MCF 10A (cell line): ENCODE measurements at regions of chr19 and their contacts with region 1.

Region 1: DNA sequence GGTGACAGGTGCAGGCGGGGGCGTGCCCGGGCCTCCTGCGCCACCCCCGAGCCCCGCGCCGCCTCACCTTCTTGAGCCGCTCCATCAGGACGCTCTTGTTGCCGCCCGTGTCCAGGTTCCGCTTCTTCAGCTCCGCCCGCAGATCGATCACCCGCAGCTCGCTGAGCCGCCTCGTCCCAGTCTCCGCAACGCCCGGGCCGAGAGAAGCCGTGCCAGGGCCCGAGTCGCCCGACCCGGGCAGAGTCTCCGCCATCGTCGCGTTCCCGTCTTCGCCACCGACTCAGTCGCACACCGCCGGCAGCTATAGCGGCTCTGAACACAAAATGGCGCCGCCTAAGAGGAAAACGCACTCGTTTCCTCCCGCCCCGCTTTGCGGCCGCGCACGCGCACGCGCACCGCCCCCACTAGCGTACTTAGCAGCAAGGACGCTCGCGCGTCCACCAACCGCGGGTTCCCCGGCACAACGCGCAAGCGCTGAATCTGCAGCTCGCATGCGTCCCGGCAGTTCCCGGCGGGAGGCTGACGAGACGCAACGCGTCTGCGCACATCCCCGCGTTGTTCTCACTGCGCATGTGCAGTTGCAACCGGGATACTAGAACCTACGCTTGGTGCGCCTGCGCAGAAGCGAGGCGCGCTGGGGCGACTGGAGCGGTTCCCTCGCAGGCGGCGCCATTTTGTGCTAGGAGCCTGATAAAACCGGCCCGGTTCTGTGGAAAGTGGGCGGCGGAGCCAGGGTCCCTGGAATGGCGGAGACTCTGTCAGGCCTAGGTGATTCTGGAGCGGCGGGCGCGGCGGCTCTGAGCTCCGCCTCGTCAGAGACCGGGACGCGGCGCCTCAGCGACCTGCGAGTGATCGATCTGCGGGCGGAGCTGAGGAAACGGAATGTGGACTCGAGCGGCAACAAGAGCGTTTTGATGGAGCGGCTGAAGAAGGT is at the starts of genes SAFB and SAFB2:
- DNase-seq: peak; percentile 100
- H3K4me3 Mint-ChIP-seq: peak within 1 kb of the TSS; percentile 100
- H3K27ac Mint-ChIP-seq: peak within 1 kb of the TSS; percentile 100
- H3K4me1 Mint-ChIP-seq: peaks cover 41% of the 10 kb centered on the region
- H3K27me3 Mint-ChIP-seq: no peaks in the 10 kb centered on the region
- CTCF ChIP-seq: no peak
- total RNA-seq, gene SAFB: 135 and 137 TPM in 2 replicates
- total RNA-seq, gene SAFB2: 98.6 and 118 TPM in 2 replicates

Region 2: GRCh38 chr19:5563941-5564612 is 58.7 kb before region 1 on chr19:
- CTCF ChIA-PET with region 1: no interaction called
- POLR2A ChIA-PET with region 1: no interaction called
- intact Hi-C with region 1: no loop called
- DNase-seq: peak; percentile 78
- H3K4me3 Mint-ChIP-seq: no peak overlapping the region
- H3K27ac Mint-ChIP-seq: no peak overlapping the region
- H3K4me1 Mint-ChIP-seq: no peaks in the 10 kb centered on the region
- H3K27me3 Mint-ChIP-seq: no peaks in the 10 kb centered on the region
- CTCF ChIP-seq: no peak

Region 3: DNA sequence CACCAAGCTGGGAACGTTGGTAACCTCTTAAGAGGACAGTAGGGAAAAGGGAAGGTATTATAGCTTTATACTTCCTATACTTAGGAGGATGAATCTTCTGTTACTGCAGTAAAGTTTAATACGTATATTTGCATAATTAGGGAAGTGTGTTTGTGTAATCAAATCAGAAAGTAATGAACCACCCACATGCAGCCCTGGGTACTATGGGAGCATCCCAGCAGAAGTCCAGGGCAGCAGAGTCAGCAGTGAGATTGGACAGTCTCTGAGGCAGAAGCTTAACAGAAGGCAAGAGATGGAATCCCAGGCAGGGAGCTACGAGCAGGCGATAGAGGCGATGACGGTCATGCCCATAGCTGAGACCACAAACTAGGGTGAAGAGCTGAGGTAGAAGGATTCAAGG is 12.7 kb after region 1 on chr19:
- CTCF ChIA-PET with region 1: interaction called, 7 read pairs
- POLR2A ChIA-PET with region 1: interaction called, 21 read pairs
- intact Hi-C with region 1: no loop called
- DNase-seq: no peak
- H3K4me3 Mint-ChIP-seq: no peak overlapping the region
- H3K27ac Mint-ChIP-seq: peak overlapping the region; percentile 50
- H3K4me1 Mint-ChIP-seq: peaks cover 16% of the 10 kb centered on the region
- H3K27me3 Mint-ChIP-seq: no peaks in the 10 kb centered on the region
- CTCF ChIP-seq: no peak